RWPE1 (cell line): ENCODE measurements at regions of chr3 and their contacts with region 1.

Region 1: DNA sequence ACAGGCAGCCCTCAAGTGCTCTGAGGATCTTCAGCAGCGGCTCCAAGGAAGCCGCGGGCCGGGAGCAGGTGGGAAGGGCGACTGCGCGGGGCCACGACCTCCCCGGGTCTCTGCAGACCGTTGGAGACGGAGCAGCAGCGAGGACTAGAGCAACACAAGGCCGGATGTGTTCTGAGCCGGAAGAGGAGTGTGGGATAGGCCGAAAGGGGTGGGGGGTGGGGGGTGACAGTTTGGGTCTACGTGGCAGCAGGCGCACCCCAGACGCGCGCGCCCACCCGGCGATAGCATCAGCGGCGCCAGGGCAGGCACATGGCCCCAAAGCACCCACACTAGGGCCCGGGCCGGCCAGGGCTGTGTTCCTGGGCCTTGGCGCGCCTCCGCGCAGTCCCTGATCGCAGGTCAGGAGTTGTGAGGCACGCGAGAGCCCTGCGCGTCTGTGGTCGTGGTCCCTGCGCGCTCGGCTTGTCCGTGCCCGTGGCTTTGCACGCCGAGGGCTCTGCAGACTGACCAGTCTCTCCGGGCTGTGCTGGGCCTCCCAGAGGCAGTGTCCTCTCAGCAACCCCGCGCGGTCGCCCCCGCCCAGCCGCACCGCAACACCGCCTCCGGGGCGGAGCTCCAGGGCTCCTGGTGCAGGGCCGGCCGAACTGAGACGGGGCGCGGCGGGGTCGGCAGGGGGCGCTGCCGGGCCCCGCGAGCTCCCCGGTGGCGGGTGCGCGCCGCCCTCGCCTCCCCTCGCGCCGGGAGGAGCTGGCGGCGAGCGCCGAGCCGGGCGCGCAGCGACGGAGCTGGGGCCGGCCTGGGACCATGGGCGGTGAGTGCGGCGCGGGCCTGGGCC is at the start of gene PXYLP1:
- DNase-seq: peak; percentile 81
- H3K27ac ChIP-seq: 0 out of 2 replicates have a peak within 1 kb of the TSS, but pooled peaks have one; percentile 5
- CTCF ChIP-seq: peak; percentile 96

Region 2: GRCh38 chr3:141051443-141052200 is 179.7 kb before region 1 on chr3:
- CTCF ChIA-PET with region 1: no interaction called
- POLR2A ChIA-PET with region 1: no interaction called
- DNase-seq: no peak
- H3K27ac ChIP-seq: no peak overlapping the region
- CTCF ChIP-seq: no peak

Region 3: GRCh38 chr3:141250342-141250741 is 19.0 kb after region 1 on chr3:
- CTCF ChIA-PET with region 1: interaction called, 10 read pairs
- POLR2A ChIA-PET with region 1: interaction called, 4 read pairs
- DNase-seq: no peak
- H3K27ac ChIP-seq: no peak overlapping the region
- CTCF ChIP-seq: no peak

Region 4: DNA sequence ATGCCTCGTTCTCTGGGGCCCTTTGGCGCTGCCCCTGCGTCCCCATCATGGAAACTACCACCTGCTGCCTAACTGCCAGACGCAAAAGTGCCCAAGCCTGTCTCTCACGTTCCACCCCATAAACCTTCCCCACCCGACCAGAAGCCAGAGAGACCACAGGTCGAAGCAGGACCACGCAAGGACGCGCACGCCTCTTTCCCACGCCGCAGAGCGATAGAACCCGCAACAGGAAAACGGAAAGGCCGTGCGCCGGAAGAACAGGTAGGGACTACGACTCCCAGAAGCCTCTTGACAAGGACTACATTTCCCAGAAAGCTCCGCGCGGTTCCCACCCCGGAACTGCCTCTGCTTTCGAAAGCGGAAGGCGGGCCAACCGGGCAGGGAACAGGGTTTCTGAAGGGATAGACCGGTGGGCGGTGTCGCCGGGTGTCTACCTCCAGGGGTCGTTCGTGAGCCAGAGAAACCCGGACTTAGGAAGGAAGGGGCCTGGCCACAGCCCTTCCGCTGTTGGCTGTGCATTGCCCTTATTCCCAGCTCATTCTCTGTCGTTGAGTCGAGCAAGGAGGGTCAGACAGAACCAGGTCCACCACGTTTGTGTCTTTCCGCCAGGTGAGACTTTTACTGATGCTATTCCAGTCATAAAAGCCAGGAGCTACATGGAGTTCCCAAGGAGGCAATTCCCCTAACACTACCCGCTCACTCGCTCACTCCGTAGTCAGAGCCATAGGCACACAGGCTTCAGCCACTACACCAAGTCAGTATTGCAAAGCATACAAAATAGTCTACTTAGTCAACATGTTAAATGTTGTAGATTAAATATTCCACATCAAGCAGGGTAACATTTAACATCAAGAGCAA is 80.4 kb after region 1 on chr3:
- CTCF ChIA-PET with region 1: interaction called, 10 read pairs
- POLR2A ChIA-PET with region 1: interaction called, 9 read pairs
- DNase-seq: peak; percentile 97
- H3K27ac ChIP-seq: peak overlapping the region; percentile 61
- CTCF ChIP-seq: peak; percentile 80